ENCODE measurements at regions of chr6 and their contacts with region 1.

Region 1: GRCh38 chr6:158869826-158870648 is 50.9 kb upstream of the EZR start:
- DNase-seq: peak; percentile 80
- ATAC-seq: peak; percentile 72
- H3K4me3 Mint-ChIP-seq: peak overlapping the region; percentile 85
- H3K27ac Mint-ChIP-seq: peak overlapping the region; percentile 100
- H3K4me1 Mint-ChIP-seq: peaks cover 63% of the 10 kb centered on the region
- H3K27me3 Mint-ChIP-seq: no peaks in the 10 kb centered on the region
- CTCF ChIP-seq: no peak

Region 2: GRCh38 chr6:158704181-158704822 is 165.7 kb before region 1 on chr6:
- CTCF ChIA-PET with region 1: interaction called, 8 read pairs
- POLR2A ChIA-PET with region 1: interaction called, 12 read pairs
- intact Hi-C with region 1: loop called (anchors 1 kb)
- DNase-seq: peak; percentile 89
- ATAC-seq: peak; percentile 95
- H3K4me3 Mint-ChIP-seq: peak overlapping the region; percentile 86
- H3K27ac Mint-ChIP-seq: peak overlapping the region; percentile 81
- H3K4me1 Mint-ChIP-seq: peaks cover 29% of the 10 kb centered on the region
- H3K27me3 Mint-ChIP-seq: no peaks in the 10 kb centered on the region
- CTCF ChIP-seq: peak; percentile 92

Region 3: GRCh38 chr6:158793432-158793831 is 76.6 kb before region 1 on chr6:
- CTCF ChIA-PET with region 1: interaction called, 7 read pairs
- POLR2A ChIA-PET with region 1: interaction called, 27 read pairs
- intact Hi-C with region 1: no loop called
- DNase-seq: no peak
- ATAC-seq: peak; percentile 54
- H3K4me3 Mint-ChIP-seq: peak overlapping the region; percentile 44
- H3K27ac Mint-ChIP-seq: peak overlapping the region; percentile 70
- H3K4me1 Mint-ChIP-seq: peaks cover 95% of the 10 kb centered on the region
- H3K27me3 Mint-ChIP-seq: no peaks in the 10 kb centered on the region
- CTCF ChIP-seq: no peak

Region 4: GRCh38 chr6:158819213-158819909 is 50.7 kb before region 1 on chr6 and contains the start of gene EZR:
- CTCF ChIA-PET with region 1: interaction called, 8 read pairs
- POLR2A ChIA-PET with region 1: interaction called, 454 read pairs
- intact Hi-C with region 1: loop called (anchors 1 kb)
- DNase-seq: peak; percentile 80
- ATAC-seq: peak; percentile 66
- H3K4me3 Mint-ChIP-seq: peak within 1 kb of the TSS; percentile 100
- H3K27ac Mint-ChIP-seq: peak within 1 kb of the TSS; percentile 95
- H3K4me1 Mint-ChIP-seq: peaks cover 51% of the 10 kb centered on the region
- H3K27me3 Mint-ChIP-seq: no peaks in the 10 kb centered on the region
- CTCF ChIP-seq: no peak
- total RNA-seq, gene EZR: 488 and 489 TPM in 2 replicates

Region 5: DNA sequence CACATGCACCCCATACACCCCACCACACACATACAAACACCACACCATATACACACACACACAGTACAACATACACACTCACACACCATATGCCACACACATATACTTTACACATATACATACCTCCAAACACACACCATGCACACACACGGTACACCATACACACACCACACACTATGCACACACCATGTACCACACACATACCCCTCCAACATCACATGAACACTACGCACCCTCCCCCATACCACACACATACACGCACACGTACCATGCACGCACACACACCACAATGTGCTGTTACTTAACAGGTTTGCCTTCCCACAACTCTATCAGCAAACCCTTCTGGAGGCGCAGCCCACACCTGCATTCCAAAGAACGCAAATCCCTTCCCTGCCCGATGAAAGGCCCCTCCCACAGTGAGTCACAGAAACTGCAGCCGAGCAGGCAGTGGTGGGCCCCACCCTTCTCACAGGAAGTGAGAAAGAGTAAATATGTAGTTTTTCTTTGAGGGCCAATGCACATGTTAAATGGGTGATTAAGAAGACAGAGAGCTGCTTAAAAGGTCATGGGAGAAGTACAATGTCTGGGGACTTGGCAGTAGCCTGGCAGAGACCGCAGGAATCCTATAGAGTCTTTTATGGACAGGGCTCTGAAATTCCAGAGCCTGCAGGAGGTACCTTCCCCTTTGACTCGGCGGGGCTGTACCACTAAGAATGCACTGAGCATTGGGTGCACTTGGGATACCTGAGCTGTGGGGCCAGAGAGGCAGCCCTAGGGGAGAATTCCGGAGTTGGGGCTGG is 16.8 kb before region 1 on chr6:
- CTCF ChIA-PET with region 1: interaction called, 12 read pairs
- POLR2A ChIA-PET with region 1: interaction called, 238 read pairs
- intact Hi-C with region 1: loop called (anchors 1 kb)
- DNase-seq: peak; percentile 68
- ATAC-seq: peak; percentile 87
- H3K4me3 Mint-ChIP-seq: no peak overlapping the region
- H3K27ac Mint-ChIP-seq: no peak overlapping the region
- H3K4me1 Mint-ChIP-seq: peaks cover 26% of the 10 kb centered on the region
- H3K27me3 Mint-ChIP-seq: no peaks in the 10 kb centered on the region
- CTCF ChIP-seq: no peak

Region 6: DNA sequence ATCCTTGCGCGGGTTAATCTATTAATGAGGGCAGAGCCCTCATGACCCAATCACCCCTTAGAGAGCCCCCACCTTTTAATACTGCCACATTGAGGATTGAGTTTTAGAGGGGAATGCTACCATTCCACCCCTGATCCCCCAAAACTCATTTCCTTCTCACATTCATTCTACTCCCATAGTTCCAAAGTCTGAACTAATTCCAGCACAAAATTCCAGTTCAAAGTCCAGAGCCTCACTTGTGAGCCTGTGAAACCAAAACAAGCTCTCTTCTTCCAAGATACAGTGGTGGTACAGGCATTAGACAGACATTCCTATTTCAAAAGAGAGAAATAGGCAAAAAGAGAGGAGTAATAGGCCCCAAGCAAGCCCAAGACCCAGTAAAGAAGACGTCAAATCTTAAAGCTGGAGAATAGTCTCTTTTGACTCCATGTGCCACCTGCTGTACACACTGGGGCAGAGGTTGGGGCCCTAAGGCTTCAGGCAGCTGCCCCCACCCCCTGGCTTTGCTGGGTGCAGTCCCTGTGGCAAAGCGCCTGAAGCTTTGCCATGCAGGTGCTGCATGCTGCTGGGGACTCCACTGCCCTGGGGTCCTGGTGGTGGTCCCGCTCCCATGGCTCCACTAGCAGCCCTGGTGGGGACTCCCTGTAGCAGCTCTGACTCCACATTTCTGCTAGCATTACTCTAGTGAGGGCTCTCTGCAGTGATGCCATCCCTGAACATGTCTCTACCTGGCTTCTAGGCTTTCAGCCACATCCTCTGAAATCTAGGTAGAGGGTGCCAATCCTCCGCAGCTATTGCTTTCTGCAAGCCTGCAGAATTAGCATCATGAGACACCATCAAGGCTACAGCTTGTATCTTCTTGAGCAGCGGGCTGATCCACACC is 88.7 kb after region 1 on chr6:
- CTCF ChIA-PET with region 1: interaction called, 15 read pairs
- POLR2A ChIA-PET with region 1: interaction called, 26 read pairs
- intact Hi-C with region 1: loop called (anchors 1 kb)
- DNase-seq: peak; percentile 20
- ATAC-seq: peak; percentile 87
- H3K4me3 Mint-ChIP-seq: no peak overlapping the region
- H3K27ac Mint-ChIP-seq: no peak overlapping the region
- H3K4me1 Mint-ChIP-seq: peaks cover 34% of the 10 kb centered on the region
- H3K27me3 Mint-ChIP-seq: no peaks in the 10 kb centered on the region
- CTCF ChIP-seq: no peak

Region 7: GRCh38 chr6:159116343-159116742 is 246.3 kb after region 1 on chr6:
- CTCF ChIA-PET with region 1: no interaction called
- POLR2A ChIA-PET with region 1: no interaction called
- intact Hi-C with region 1: loop called (anchors 2 kb)
- DNase-seq: peak; percentile 71
- ATAC-seq: peak; percentile 75
- H3K4me3 Mint-ChIP-seq: peak overlapping the region; percentile 63
- H3K27ac Mint-ChIP-seq: peak overlapping the region; percentile 99
- H3K4me1 Mint-ChIP-seq: peaks cover 86% of the 10 kb centered on the region
- H3K27me3 Mint-ChIP-seq: no peaks in the 10 kb centered on the region
- CTCF ChIP-seq: no peak

Region 8: DNA sequence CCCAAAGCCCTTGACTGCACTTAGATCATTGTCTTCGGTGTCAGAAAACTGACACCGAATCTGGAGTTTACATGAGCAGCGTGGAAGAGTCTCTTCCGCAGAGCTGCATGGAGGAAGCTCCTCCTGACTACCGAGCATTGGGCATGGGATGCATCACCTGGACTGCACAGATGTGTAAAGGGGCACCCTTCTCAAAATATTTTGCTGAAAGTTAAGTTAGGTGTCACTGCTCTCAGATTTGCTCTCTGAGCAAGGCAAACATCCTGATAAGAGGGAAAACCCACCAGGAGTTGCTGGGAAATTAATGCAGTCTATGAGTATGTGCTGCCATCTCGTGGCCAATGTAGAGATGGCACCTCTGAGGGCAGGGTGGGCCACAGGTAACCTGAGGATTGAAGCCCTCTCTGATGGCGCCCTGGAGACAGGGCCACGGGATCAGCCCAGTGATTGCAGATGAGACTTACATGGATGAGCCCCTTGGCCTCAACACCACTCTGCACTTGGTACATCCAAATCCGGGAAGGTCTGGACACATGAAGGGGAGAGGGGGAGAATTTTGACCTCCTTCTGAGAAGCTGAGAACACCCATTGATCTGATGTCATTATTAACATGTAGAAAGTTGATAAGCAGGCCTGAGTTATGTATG is 1664.1 kb after region 1 on chr6:
- CTCF ChIA-PET with region 1: no interaction called
- POLR2A ChIA-PET with region 1: no interaction called
- intact Hi-C with region 1: no loop called
- DNase-seq: peak; percentile 32
- ATAC-seq: peak; percentile 56
- H3K4me3 Mint-ChIP-seq: no peak overlapping the region
- H3K27ac Mint-ChIP-seq: no peak overlapping the region
- H3K4me1 Mint-ChIP-seq: no peaks in the 10 kb centered on the region
- H3K27me3 Mint-ChIP-seq: peaks cover 9% of the 10 kb centered on the region
- CTCF ChIP-seq: peak; percentile 63

Measured in activated B cell treated with CpG ODN at 0.5 μM for 24 hours (primary cell).